ENCODE measurements at regions of chr12 and their contacts with region 1.

Region 1: DNA sequence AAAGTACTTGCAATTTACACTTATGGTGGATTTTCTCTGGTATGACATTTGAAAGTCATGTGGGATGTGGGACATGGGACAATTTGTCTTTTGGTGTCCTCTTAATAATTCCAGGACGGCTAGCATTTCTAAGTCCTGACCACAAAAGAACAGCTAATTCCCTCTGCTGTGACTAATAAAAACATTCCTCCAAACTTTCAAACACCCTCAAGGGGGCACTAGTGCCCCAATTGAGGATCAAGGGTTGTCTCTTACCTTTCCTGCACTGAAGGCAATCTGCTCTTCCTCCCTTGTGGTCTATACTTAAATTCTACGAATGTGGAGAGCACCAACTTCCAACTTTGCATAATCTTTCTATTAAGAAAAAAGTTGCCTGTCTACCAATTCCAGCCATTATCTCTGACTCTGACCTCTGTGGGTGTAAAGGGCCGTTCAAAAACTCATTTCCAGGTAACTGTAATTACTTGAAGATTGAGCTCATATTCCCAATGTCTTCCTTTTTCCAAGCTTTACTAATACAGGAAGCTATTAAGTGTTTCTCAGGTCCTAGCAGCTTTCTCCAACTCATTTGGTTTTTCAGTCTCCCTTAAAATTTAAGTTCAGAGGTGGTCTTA is 210.2 kb downstream of the PTPRO start:
- DNase-seq: peak in 1 of 2 experiments; percentile 52
- H3K4me3 ChIP-seq: no peak overlapping the region
- H3K27ac ChIP-seq: no peak overlapping the region
- H3K4me1 ChIP-seq: no peaks in the 10 kb centered on the region
- H3K27me3 ChIP-seq: no peaks in the 10 kb centered on the region
- CTCF ChIP-seq: peak; percentile 63

Region 2: GRCh38 chr12:15584366-15585041 is 52.0 kb after region 1 on chr12:
- CTCF ChIA-PET with region 1: interaction called, 22 read pairs
- POLR2A ChIA-PET with region 1: no interaction called
- intact Hi-C with region 1: no loop called
- DNase-seq: no peak
- H3K4me3 ChIP-seq: no peak overlapping the region
- H3K27ac ChIP-seq: no peak overlapping the region
- H3K4me1 ChIP-seq: no peaks in the 10 kb centered on the region
- H3K27me3 ChIP-seq: no peaks in the 10 kb centered on the region
- CTCF ChIP-seq: peak; percentile 70

Region 3: GRCh38 chr12:15590180-15590826 is 57.8 kb after region 1 on chr12:
- CTCF ChIA-PET with region 1: interaction called, 22 read pairs
- POLR2A ChIA-PET with region 1: no interaction called
- intact Hi-C with region 1: loop called (anchors 2 kb)
- DNase-seq: peak; percentile 55 to 64
- H3K4me3 ChIP-seq: peak overlapping the region; percentile 35; the same call in 1 of the 2 replicates
- H3K27ac ChIP-seq: no peak overlapping the region
- H3K4me1 ChIP-seq: peaks cover 8% of the 10 kb centered on the region; the same call in 1 of the 2 replicates
- H3K27me3 ChIP-seq: no peaks in the 10 kb centered on the region
- CTCF ChIP-seq: peak; percentile 92

Region 4: GRCh38 chr12:15856097-15856982 is 323.9 kb after region 1 on chr12:
- CTCF ChIA-PET with region 1: interaction called, 8 read pairs
- POLR2A ChIA-PET with region 1: no interaction called
- intact Hi-C with region 1: loop called (anchors 1 kb)
- DNase-seq: peak; percentile 63 to 65
- H3K4me3 ChIP-seq: peak overlapping the region; percentile 18; the same call in 1 of the 2 replicates
- H3K27ac ChIP-seq: peak overlapping the region; percentile 84
- H3K4me1 ChIP-seq: peaks cover 26% of the 10 kb centered on the region
- H3K27me3 ChIP-seq: no peaks in the 10 kb centered on the region
- CTCF ChIP-seq: peak; percentile 89

Region 5: GRCh38 chr12:15899282-15899870 is 366.9 kb after region 1 on chr12:
- CTCF ChIA-PET with region 1: interaction called, 3 read pairs
- POLR2A ChIA-PET with region 1: interaction called, 9 read pairs
- intact Hi-C with region 1: loop called (anchors 1 kb)
- DNase-seq: peak in 1 of 2 experiments; percentile 38
- H3K4me3 ChIP-seq: no peak overlapping the region
- H3K27ac ChIP-seq: no peak overlapping the region; the same call in 1 of the 2 replicates
- H3K4me1 ChIP-seq: no peaks in the 10 kb centered on the region
- H3K27me3 ChIP-seq: no peaks in the 10 kb centered on the region
- CTCF ChIP-seq: peak; percentile 86

Region 6: DNA sequence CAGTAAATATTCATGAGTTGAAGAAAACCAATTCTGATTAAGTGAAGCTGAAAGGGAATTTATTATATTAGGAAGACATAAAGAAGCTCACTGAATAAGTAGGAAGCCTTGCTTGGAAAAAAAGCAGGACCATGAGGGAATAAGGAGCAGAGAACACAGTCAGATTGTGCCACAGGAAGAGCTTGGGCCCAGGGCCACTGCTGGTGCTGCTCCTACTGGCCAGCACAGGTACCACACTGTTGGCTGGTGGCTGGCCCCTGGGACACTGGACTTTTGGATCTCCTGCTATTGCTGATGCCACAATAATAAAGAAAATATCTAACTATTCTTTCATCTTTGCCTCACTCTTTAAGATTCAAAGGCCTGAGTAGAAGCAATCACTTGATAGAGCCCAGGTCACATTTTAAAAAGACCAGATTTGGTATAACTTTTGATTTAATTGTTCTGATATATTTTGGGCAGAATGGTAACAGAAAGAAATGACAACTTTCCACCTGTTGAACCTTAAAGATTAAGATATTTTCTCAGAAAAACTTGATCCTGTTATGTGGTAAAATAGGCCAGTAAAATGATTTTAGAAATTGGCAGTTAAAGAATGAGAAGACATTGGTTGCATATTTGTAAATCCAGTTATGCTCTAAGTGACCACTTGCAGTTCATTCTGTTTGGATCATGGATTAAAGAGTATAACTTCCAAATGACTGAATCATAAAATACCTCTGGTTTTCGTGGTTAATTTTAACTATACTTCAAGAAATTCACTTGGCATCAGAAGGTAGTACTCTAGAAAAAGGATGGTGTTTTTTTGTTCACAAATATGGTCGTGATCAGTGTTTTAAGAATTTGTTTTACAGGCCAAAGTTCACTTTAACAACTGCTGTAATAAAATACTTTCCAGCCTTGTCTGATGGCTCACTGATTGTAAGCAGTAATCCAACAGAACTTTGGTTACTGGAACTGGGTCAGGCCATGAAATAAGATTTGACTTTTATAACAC is 446.9 kb after region 1 on chr12:
- CTCF ChIA-PET with region 1: no interaction called
- POLR2A ChIA-PET with region 1: no interaction called
- intact Hi-C with region 1: loop called (anchors 10 kb)
- DNase-seq: peak; percentile 15 to 50
- H3K4me3 ChIP-seq: no peak overlapping the region
- H3K27ac ChIP-seq: peak overlapping the region; percentile 84
- H3K4me1 ChIP-seq: peaks cover 36% of the 10 kb centered on the region
- H3K27me3 ChIP-seq: no peaks in the 10 kb centered on the region
- CTCF ChIP-seq: peak; percentile 66